Testis (tissue), 5 donors: ENCODE measurements at regions of chr1 and their contacts with region 1.

Region 1: GRCh38 chr1:202009326-202010179 is 834 bp upstream of the ELF3 start:
- DNase-seq: peak; percentile 89
- H3K4me3 ChIP-seq: no peak overlapping the region
- H3K27ac ChIP-seq: no peak overlapping the region
- H3K4me1 ChIP-seq: peaks cover 4% of the 10 kb centered on the region
- H3K27me3 ChIP-seq: no peaks in the 10 kb centered on the region
- CTCF ChIP-seq: peak; percentile 87 to 88 (median 88)
- POLR2A ChIP-seq: no peak

Region 2: DNA sequence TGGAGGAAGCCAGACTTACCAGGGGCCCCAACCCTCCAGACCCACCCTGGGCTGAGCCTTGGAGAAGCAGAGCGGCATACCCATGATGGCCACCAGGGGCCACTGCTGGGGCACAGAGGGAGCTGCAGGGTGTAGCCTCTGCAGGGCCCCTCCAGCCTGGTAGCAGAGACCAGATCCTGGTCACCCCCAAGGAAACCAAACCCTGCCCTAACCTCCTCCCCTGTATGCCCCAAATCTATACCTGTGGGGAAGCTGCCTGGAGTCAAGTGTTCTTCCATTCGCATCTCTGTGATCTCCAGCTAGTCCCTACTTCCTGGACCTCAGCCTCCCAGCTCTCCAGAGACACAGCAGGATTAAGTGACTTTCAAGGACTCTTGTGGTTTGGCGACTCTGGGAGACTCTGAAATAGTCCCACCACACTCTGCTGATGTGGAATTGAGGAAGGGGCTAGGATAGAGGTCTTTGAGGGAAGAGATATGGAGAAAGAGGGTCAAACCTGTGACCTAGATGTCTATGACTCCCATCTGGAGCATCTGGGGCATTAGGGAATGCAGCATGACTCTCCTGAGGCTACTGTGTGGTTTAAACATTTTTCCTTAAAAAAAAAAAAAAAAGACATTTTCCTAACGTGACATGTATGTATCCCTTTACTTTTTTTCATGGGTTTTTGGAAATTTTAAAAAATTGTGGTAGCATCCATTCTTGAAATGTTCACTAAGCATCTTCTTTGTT is 299.8 kb before region 1 on chr1:
- intact Hi-C with region 1: no loop called
- DNase-seq: peak; percentile 76
- H3K4me3 ChIP-seq: no peak overlapping the region
- H3K27ac ChIP-seq: no peak overlapping the region
- H3K4me1 ChIP-seq: peaks cover 24% of the 10 kb centered on the region
- H3K27me3 ChIP-seq: no peaks in the 10 kb centered on the region
- CTCF ChIP-seq: peak; percentile 79 to 92 (median 86)
- POLR2A ChIP-seq: no peak

Region 3: GRCh38 chr1:202132031-202132907 is 122.7 kb after region 1 on chr1:
- intact Hi-C with region 1: loop called (anchors 5 kb)
- DNase-seq: peak; percentile 91
- H3K4me3 ChIP-seq: no peak overlapping the region
- H3K27ac ChIP-seq: peak overlapping the region; percentile 92
- H3K4me1 ChIP-seq: peaks cover 63% of the 10 kb centered on the region
- H3K27me3 ChIP-seq: no peaks in the 10 kb centered on the region
- CTCF ChIP-seq: no peak
- POLR2A ChIP-seq: no peak

Region 4: DNA sequence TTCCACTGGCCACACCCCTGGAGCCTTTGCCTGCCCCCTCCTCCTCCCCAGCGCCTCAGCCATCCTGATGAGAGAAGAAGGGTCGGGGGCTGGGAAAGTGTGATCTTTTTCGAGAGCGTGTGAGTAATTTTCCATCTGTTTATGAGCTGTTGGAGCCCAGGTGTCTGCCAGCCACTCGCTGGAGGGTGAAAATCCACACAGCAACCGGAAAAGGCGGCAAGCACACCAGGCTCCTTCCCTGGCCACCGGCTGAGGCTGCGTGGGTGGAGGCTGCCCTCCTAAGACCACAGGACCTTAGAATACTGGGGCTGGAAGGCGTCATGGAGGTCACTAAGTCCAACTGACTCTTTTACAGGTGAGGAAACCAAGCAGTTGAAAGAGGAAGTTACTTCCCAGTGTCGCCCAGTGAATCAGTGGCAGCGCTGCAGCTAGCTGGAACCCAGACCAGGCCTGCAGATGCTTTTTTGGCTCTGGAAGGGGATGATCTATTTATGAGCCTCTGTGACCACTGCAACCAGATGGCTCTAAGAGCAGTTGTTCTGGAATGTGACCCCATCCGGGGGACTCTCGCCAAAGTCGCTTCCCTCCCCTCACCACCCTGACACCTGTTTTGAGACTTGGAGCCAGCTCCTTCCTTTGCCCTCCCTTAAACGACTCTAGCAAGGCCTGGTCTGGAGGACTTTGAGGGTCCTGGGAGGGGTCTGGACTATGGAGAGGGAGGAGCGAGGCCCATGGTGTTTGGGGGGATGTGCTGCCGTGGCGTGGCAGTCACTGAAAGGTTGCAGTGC is 238.5 kb after region 1 on chr1:
- intact Hi-C with region 1: no loop called
- DNase-seq: no peak
- H3K4me3 ChIP-seq: no peak overlapping the region
- H3K27ac ChIP-seq: no peak overlapping the region
- H3K4me1 ChIP-seq: no peaks in the 10 kb centered on the region
- H3K27me3 ChIP-seq: no peaks in the 10 kb centered on the region
- CTCF ChIP-seq: no peak
- POLR2A ChIP-seq: no peak